ENCODE measurements at regions of chr7 and their contacts with region 1.

Region 1: GRCh38 chr7:17298207-17298839 is at the start of gene AHR:
- DNase-seq: peak; percentile 86
- ATAC-seq: peak; percentile 94
- H3K4me3 ChIP-seq: peak within 1 kb of the TSS; percentile 78 to 95 (median 82)
- H3K27ac ChIP-seq: peak within 1 kb of the TSS; percentile 83
- H3K4me1 ChIP-seq: peaks cover 24% of the 10 kb centered on the region
- H3K27me3 ChIP-seq: peaks cover 0 to 2% of the 10 kb centered on the region in 2 experiments; a peak in 1 of 5 replicates
- CTCF ChIP-seq: no peak
- EP300 ChIP-seq: 0 out of 4 replicates have a peak, but pooled peaks of 1 of the 2 experiments have one; percentile 6
- POLR2A ChIP-seq: peak; percentile 88 to 97
- RAD21 ChIP-seq: peak; percentile 53; the same call in 1 of the 2 replicates
- total RNA-seq, gene AHR: 31.3 and 34.1 TPM in 2 replicates

Region 2: DNA sequence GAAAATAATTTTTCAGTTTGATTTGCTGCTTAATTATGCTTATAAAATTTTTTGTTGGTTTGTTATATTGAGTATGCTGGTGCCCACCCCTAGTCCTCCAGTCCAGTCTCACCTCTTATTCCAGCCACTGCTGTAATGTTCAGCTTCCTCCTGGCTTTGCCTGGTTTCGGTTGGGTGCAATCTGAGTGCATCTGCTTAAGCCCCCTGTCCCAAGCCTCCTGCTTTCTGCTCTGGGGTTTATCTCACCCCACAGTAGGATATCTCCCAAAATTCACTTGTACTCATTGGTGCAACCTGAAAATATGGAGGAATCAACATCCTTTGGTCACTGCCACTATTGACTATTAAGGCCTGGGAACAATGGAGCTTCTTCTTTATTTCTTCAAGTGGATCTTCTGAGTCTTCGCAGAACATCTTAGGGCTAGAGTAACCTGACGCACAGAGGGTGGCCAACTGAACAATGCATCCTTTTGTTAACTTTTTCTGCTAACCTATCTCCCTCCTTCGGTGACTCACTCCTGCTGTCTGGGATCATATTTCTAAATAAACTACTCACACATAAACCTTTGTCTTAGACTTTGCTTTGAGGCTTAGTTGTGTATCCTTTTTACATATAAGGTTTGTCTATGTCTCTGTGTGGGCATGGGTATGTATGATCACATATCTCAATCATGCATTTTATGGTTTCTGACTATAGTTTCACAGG is 813.7 kb before region 1 on chr7:
- CTCF ChIA-PET with region 1: no interaction called
- POLR2A ChIA-PET with region 1: no interaction called
- in situ Hi-C with region 1: no loop called
- intact Hi-C with region 1: no loop called
- DNase-seq: peak; percentile 76
- ATAC-seq: peak; percentile 74
- H3K4me3 ChIP-seq: no peak overlapping the region
- H3K27ac ChIP-seq: no peak overlapping the region
- H3K4me1 ChIP-seq: peaks cover 16% of the 10 kb centered on the region
- H3K27me3 ChIP-seq: no peaks in the 10 kb centered on the region
- CTCF ChIP-seq: no peak
- EP300 ChIP-seq: peak in 1 of 2 experiments; percentile 62; a peak in 1 of 4 replicates
- POLR2A ChIP-seq: no peak
- RAD21 ChIP-seq: no peak

Region 3: GRCh38 chr7:16926283-16926682 is 372.0 kb before region 1 on chr7:
- CTCF ChIA-PET with region 1: interaction called, 4 read pairs
- POLR2A ChIA-PET with region 1: no interaction called
- in situ Hi-C with region 1: no loop called
- intact Hi-C with region 1: loop called (anchors 1 kb)
- DNase-seq: peak; percentile 28
- ATAC-seq: peak; percentile 86
- H3K4me3 ChIP-seq: no peak overlapping the region
- H3K27ac ChIP-seq: no peak overlapping the region
- H3K4me1 ChIP-seq: peaks cover 28% of the 10 kb centered on the region
- H3K27me3 ChIP-seq: no peaks in the 10 kb centered on the region; a peak in 1 of 5 replicates
- CTCF ChIP-seq: peak; percentile 57
- EP300 ChIP-seq: no peak
- POLR2A ChIP-seq: no peak
- RAD21 ChIP-seq: peak; percentile 35; the same call in 1 of the 2 replicates

Region 4: DNA sequence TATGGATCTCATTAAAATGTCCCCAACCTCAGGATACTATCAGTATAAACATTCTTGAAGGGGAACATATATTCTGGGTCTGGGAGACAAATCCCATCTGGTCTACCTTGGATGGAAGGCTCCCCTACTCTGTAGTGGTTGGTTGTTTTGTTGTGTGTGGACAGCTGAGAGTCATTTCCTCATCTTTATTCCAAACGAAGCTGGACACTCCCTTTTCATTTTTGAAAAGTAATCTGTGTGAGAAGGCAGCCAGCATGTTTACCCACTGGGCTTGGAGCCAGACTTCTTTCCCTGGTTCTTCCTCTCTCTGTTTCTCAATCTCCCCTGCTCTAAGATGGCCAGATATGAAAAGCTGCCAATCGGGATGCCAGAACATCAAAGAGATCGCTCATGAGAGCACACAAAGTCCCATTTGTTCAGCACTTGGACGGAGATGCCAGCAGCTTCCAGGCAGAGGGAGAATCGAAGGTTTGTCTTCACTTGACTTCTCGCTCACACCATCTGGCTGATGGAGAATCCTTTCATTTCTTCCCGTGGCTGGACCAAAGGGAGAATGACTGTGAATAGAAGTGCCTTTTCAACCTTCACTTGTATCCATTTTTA is 308.4 kb before region 1 on chr7:
- CTCF ChIA-PET with region 1: no interaction called
- POLR2A ChIA-PET with region 1: interaction called, 20 read pairs
- in situ Hi-C with region 1: loop called (anchors 5 kb)
- intact Hi-C with region 1: no loop called
- DNase-seq: peak; percentile 100
- ATAC-seq: peak; percentile 96
- H3K4me3 ChIP-seq: peak overlapping the region; percentile 15 to 51 (median 36); a peak in 5 of 6 replicates
- H3K27ac ChIP-seq: peak overlapping the region; percentile 76
- H3K4me1 ChIP-seq: peaks cover 81% of the 10 kb centered on the region
- H3K27me3 ChIP-seq: no peaks in the 10 kb centered on the region
- CTCF ChIP-seq: no peak
- EP300 ChIP-seq: peak; percentile 49 to 98; a peak in 2 of 4 replicates
- POLR2A ChIP-seq: peak in 1 of 2 experiments; percentile 41; a peak in 1 of 4 replicates
- RAD21 ChIP-seq: no peak; the same call in none of the 2 replicates

Region 5: DNA sequence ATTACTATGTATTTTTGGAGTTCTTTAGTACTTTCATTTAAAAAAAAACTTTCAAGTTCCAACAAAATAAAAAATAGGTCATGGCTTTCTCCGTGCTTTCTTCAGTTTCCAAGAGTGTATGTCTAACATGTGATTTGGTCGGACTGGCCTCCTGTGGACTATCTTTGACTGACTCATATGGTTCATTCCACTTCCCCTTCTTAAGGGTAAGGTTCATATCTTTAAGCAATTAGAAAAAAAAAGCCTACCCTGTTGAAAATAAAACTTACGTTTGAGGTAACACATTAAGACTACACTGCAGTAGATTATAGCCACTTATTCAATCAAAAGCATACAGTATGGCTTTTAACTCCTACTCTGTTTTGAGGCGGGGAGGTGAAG is 112.6 kb before region 1 on chr7:
- CTCF ChIA-PET with region 1: no interaction called
- POLR2A ChIA-PET with region 1: interaction called, 3 read pairs
- in situ Hi-C with region 1: no loop called
- intact Hi-C with region 1: loop called (anchors 1 kb)
- DNase-seq: no peak
- ATAC-seq: no peak
- H3K4me3 ChIP-seq: no peak overlapping the region
- H3K27ac ChIP-seq: peak overlapping the region; percentile 83
- H3K4me1 ChIP-seq: peaks cover 43% of the 10 kb centered on the region
- H3K27me3 ChIP-seq: no peaks in the 10 kb centered on the region
- CTCF ChIP-seq: no peak
- EP300 ChIP-seq: no peak
- POLR2A ChIP-seq: no peak
- RAD21 ChIP-seq: no peak

Region 6: GRCh38 chr7:17275749-17276671 is 22.3 kb before region 1 on chr7:
- CTCF ChIA-PET with region 1: no interaction called
- POLR2A ChIA-PET with region 1: interaction called, 28 read pairs
- in situ Hi-C with region 1: no loop called
- intact Hi-C with region 1: no loop called
- DNase-seq: peak; percentile 68
- ATAC-seq: peak; percentile 49; the same call in 2 of the 3 replicates
- H3K4me3 ChIP-seq: no peak overlapping the region
- H3K27ac ChIP-seq: no peak overlapping the region
- H3K4me1 ChIP-seq: no peaks in the 10 kb centered on the region
- H3K27me3 ChIP-seq: no peaks in the 10 kb centered on the region
- CTCF ChIP-seq: no peak
- EP300 ChIP-seq: no peak
- POLR2A ChIP-seq: no peak
- RAD21 ChIP-seq: no peak

Measured in HepG2 (cell line).